GM12878 (cell line): ENCODE measurements at regions of chr7 and their contacts with region 1.

Region 1: GRCh38 chr7:69739931-69740431 is 141.7 kb downstream of the AUTS2 start:
- DNase-seq: peak; percentile 81
- ATAC-seq: peak; percentile 82
- H3K4me3 ChIP-seq: no peak overlapping the region
- H3K27ac ChIP-seq: peak overlapping the region; percentile 29
- H3K4me1 ChIP-seq: peaks cover 32% of the 10 kb centered on the region
- H3K27me3 ChIP-seq: no peaks in the 10 kb centered on the region
- CTCF ChIP-seq: no peak
- EP300 ChIP-seq: peak; percentile 62 to 67; a peak in 2 of 4 replicates
- POLR2A ChIP-seq: peak; percentile 48; the same call in 1 of the 2 replicates
- RAD21 ChIP-seq: 0 out of 2 replicates have a peak, but pooled peaks have one; percentile 9

Region 2: GRCh38 chr7:69640216-69640615 is 99.8 kb before region 1 on chr7:
- CTCF ChIA-PET with region 1: no interaction called
- POLR2A ChIA-PET with region 1: no interaction called
- RAD21 ChIA-PET with region 1: no interaction called
- SMC1A ChIA-PET with region 1: no interaction called
- in situ Hi-C with region 1: no loop called
- intact Hi-C with region 1: no loop called
- DNase-seq: no peak
- ATAC-seq: no peak
- H3K4me3 ChIP-seq: no peak overlapping the region
- H3K27ac ChIP-seq: no peak overlapping the region
- H3K4me1 ChIP-seq: no peaks in the 10 kb centered on the region; the same call in 1 of the 2 replicates
- H3K27me3 ChIP-seq: no peaks in the 10 kb centered on the region
- CTCF ChIP-seq: no peak
- EP300 ChIP-seq: no peak
- POLR2A ChIP-seq: no peak
- RAD21 ChIP-seq: no peak

Region 3: DNA sequence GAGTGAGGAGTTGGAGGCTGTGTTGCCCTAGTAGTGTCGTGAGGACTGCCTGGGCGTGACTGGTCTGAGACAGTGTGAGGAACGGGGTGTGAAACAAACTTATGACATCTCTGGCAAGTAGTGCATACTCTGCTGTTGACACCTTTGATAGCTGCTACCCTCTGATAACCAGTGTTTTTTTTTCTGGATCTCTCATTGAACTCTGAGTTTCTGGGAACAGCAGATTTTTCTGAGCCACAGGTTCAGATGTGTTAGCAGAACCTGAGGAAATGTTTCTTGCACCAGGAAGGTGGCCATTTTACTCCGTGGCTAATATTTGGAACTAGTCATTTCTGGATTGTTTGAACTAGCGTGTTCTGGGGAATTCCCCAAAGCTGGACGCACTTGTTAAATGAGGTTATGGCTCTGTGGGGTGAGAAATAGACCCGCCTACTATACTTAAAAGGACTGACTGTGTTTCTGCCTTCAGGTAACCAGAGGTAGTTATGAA is 88.8 kb before region 1 on chr7:
- CTCF ChIA-PET with region 1: no interaction called
- POLR2A ChIA-PET with region 1: interaction called, 3 read pairs
- RAD21 ChIA-PET with region 1: interaction called, 9 read pairs
- SMC1A ChIA-PET with region 1: interaction called, 13 read pairs
- in situ Hi-C with region 1: no loop called
- intact Hi-C with region 1: no loop called
- DNase-seq: peak; percentile 75
- ATAC-seq: peak; percentile 79
- H3K4me3 ChIP-seq: no peak overlapping the region
- H3K27ac ChIP-seq: peak overlapping the region; percentile 20
- H3K4me1 ChIP-seq: peaks cover 35% of the 10 kb centered on the region
- H3K27me3 ChIP-seq: no peaks in the 10 kb centered on the region
- CTCF ChIP-seq: no peak
- EP300 ChIP-seq: peak in 1 of 2 experiments; percentile 44; a peak in 2 of 4 replicates
- POLR2A ChIP-seq: no peak
- RAD21 ChIP-seq: no peak

Region 4: GRCh38 chr7:69684369-69685292 is 55.4 kb before region 1 on chr7:
- CTCF ChIA-PET with region 1: interaction called, 6 read pairs
- POLR2A ChIA-PET with region 1: interaction called, 4 read pairs
- RAD21 ChIA-PET with region 1: interaction called, 35 read pairs
- SMC1A ChIA-PET with region 1: interaction called, 18 read pairs
- in situ Hi-C with region 1: no loop called
- intact Hi-C with region 1: loop called (anchors 5 kb)
- DNase-seq: no peak
- ATAC-seq: peak; percentile 15
- H3K4me3 ChIP-seq: no peak overlapping the region
- H3K27ac ChIP-seq: peak overlapping the region; percentile 1; the same call in 1 of the 2 replicates
- H3K4me1 ChIP-seq: peaks cover 20% of the 10 kb centered on the region
- H3K27me3 ChIP-seq: no peaks in the 10 kb centered on the region
- CTCF ChIP-seq: no peak
- EP300 ChIP-seq: no peak
- POLR2A ChIP-seq: no peak
- RAD21 ChIP-seq: no peak

Region 5: DNA sequence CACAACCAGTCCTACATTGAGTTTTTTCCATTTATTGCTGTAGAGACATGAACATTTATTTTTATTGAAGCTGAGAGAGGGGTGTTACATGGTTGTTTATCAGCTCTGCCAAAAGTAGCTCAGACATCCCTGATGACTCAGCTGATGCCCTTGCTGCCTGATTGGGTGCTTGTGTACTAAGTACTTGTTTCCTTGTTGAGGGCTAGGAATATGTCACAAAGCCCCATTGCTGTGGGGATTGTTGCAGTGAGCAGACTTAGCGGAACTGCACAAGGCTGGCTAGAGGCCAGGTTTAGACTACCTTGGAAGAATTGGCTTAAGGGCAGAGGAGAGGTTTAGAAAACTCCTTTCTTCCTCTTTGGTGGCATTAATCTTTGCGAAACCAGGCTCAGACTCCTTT is 31.1 kb before region 1 on chr7:
- CTCF ChIA-PET with region 1: interaction called, 4 read pairs
- POLR2A ChIA-PET with region 1: no interaction called
- RAD21 ChIA-PET with region 1: interaction called, 6 read pairs
- SMC1A ChIA-PET with region 1: interaction called, 46 read pairs
- in situ Hi-C with region 1: no loop called
- intact Hi-C with region 1: no loop called
- DNase-seq: no peak
- ATAC-seq: peak; percentile 54
- H3K4me3 ChIP-seq: no peak overlapping the region
- H3K27ac ChIP-seq: no peak overlapping the region
- H3K4me1 ChIP-seq: 0 out of 2 replicates have a peak, but pooled peaks cover 5% of the 10 kb centered on the region
- H3K27me3 ChIP-seq: no peaks in the 10 kb centered on the region
- CTCF ChIP-seq: no peak
- EP300 ChIP-seq: no peak
- POLR2A ChIP-seq: no peak
- RAD21 ChIP-seq: no peak

Region 6: DNA sequence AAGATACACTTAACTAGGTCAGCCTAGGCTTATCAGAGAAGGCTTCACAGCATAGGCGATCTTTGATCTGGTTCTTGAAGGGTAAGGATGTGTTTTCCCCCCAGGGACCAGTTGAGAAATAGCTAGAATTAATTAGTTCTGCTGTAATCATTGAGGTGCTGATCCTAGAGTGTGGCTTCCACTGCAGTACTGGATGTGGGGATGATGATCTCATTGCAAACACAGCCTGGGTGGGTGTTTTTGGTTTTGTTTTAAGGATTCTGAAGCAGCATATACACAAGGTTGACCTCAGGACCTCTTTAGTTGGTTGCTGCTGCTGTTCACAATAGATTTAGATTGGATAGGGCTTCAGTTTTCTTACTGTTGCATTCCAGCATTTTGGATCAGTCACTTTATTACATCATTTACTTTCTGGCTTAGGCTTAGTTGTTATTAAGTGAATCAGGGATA is 18.0 kb after region 1 on chr7:
- CTCF ChIA-PET with region 1: interaction called, 4 read pairs
- POLR2A ChIA-PET with region 1: interaction called, 15 read pairs
- RAD21 ChIA-PET with region 1: interaction called, 42 read pairs
- SMC1A ChIA-PET with region 1: interaction called, 50 read pairs
- in situ Hi-C with region 1: no loop called
- intact Hi-C with region 1: loop called (anchors 1 kb)
- DNase-seq: no peak
- ATAC-seq: peak; percentile 76
- H3K4me3 ChIP-seq: no peak overlapping the region
- H3K27ac ChIP-seq: no peak overlapping the region
- H3K4me1 ChIP-seq: peaks cover under 1% of the 10 kb centered on the region
- H3K27me3 ChIP-seq: no peaks in the 10 kb centered on the region
- CTCF ChIP-seq: no peak
- EP300 ChIP-seq: 0 out of 4 replicates have a peak, but pooled peaks of 1 of the 2 experiments have one; percentile 25
- POLR2A ChIP-seq: no peak
- RAD21 ChIP-seq: no peak

Region 7: GRCh38 chr7:69825113-69825616 is 85.2 kb after region 1 on chr7:
- CTCF ChIA-PET with region 1: interaction called, 4 read pairs
- POLR2A ChIA-PET with region 1: interaction called, 7 read pairs
- RAD21 ChIA-PET with region 1: interaction called, 50 read pairs
- SMC1A ChIA-PET with region 1: interaction called, 54 read pairs
- in situ Hi-C with region 1: no loop called
- intact Hi-C with region 1: loop called (anchors 1 kb)
- DNase-seq: no peak
- ATAC-seq: peak; percentile 56
- H3K4me3 ChIP-seq: peak overlapping the region; percentile 68; the same call in 1 of the 2 replicates
- H3K27ac ChIP-seq: peak overlapping the region; percentile 89
- H3K4me1 ChIP-seq: peaks cover 38% of the 10 kb centered on the region
- H3K27me3 ChIP-seq: no peaks in the 10 kb centered on the region
- CTCF ChIP-seq: peak in 1 of 3 experiments; percentile 56; a peak in 2 of 6 replicates
- EP300 ChIP-seq: no peak
- POLR2A ChIP-seq: no peak
- RAD21 ChIP-seq: peak; percentile 69